HEK293T (cell line): ENCODE measurements at regions of chr19 and their contacts with region 1.

Region 1: GRCh38 chr19:2385053-2385721 is 25.1 kb downstream of the TMPRSS9 start:
- DNase-seq: peak; percentile 93

Region 2: GRCh38 chr19:2328401-2329148 is 56.6 kb before region 1 on chr19 and contains the starts of genes LSM7 and SPPL2B:
- CTCF ChIA-PET with region 1: no interaction called
- POLR2A ChIA-PET with region 1: interaction called, 10 read pairs
- DNase-seq: peak; percentile 98

Region 3: DNA sequence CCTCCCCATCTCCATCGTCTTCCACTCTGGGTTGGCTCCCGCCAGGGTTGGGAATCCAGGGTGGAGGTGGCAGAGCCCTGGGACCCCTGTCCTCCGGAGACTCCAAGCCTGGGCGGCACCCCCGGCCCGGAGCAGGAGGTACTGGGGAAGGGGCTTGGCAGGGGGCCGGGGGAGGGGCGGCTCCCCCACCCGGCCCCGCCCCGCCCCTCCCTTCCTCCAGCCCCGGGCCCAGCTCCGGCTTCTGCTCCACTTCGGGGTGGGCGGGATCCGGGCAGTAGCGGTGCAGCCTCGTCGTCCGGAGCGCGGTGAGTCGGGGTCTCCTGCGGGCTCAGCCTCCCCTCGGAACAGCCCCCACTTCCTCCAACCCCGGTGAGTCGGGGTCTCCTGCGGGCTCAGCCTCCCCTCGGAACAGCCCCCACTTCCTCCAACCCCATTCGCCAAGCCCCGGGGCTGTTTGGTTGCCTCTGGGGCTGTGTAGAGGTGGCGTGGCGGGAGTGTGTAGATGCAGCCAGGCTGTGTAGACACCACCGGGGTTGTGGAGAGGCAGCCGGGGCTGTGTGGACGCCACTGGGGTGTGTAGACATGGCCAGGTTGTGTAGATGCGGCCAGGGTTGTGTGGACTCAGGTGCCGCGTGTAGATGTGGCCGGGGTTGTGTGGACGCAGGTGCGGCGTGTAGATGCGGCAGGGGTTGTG is 25.0 kb before region 1 on chr19 and contains the start of gene TMPRSS9:
- CTCF ChIA-PET with region 1: no interaction called
- POLR2A ChIA-PET with region 1: no interaction called
- DNase-seq: no peak